ENCODE measurements at regions of chr21 and their contacts with region 1.

Region 1: GRCh38 chr21:43646550-43647260 is 12.6 kb downstream of the HSF2BP start:
- DNase-seq: peak; percentile 83 to 84
- H3K4me3 ChIP-seq: no peak overlapping the region
- H3K27ac ChIP-seq: peak overlapping the region; percentile 33
- H3K4me1 ChIP-seq: peaks cover 11% of the 10 kb centered on the region
- H3K27me3 ChIP-seq: no peaks in the 10 kb centered on the region
- CTCF ChIP-seq: peak; percentile 93

Region 2: DNA sequence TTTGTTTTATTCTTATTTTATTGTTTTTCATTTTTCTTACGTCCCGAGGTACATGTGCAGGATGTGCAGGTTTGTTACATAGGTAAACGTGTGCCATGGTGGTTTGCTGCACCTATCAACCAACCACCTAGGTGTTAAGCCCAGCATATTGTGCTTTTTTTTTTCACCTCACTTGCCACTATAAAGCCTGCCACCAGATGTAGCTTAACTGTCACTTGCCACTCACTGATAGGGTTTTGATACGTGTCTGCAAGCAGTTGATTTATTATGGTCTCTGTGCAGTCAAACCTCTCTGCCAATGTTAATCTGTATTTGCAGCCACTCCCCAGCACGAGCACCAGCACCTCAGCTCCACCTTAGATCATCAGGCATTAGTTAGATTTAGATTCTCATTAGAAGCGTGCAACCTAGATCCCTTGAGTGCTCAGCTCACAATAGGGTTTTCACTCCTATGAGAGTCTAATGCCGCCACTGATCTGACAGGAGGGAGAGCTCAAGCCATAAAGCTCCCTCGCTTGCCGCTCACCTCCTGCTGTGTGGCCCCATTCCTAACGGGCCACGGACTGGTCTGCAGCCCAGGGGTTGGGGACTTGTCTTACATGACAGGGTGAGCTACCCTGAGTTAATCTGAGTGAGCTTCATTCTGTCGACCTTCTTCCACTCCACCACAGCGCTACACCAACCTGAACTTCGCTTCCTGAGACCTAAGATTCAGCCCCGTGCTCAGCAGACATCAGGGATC is 1445.6 kb before region 1 on chr21:
- CTCF ChIA-PET with region 1: interaction called, 17 read pairs
- POLR2A ChIA-PET with region 1: no interaction called
- intact Hi-C with region 1: no loop called
- DNase-seq: no peak
- H3K4me3 ChIP-seq: no peak overlapping the region
- H3K27ac ChIP-seq: no peak overlapping the region
- H3K4me1 ChIP-seq: peaks cover 26% of the 10 kb centered on the region
- H3K27me3 ChIP-seq: no peaks in the 10 kb centered on the region
- CTCF ChIP-seq: no peak

Region 3: DNA sequence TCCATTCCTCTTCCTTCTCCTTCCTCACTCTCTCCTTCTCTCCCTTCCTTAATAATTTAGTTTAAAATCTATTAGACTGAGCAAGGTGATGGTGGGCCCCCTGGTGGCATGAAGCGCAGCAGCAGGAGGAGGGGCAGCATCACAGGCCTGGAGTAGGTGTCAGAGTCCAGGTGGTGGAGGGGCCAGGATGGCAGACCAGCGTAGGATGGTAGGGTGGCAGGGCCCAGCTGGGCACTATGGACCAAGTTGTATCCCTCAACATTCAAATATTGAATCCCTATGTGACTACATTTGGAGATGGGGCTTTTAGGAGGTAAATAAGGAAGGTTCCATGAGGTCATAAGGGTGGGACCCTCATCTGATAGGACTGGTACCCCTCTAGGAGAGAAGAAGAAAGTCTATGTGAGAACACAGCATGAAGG is 828.4 kb before region 1 on chr21:
- CTCF ChIA-PET with region 1: no interaction called
- POLR2A ChIA-PET with region 1: no interaction called
- intact Hi-C with region 1: no loop called
- DNase-seq: peak in 1 of 2 experiments; percentile 53
- H3K4me3 ChIP-seq: no peak overlapping the region
- H3K27ac ChIP-seq: no peak overlapping the region
- H3K4me1 ChIP-seq: 0 out of 2 replicates have a peak, but pooled peaks cover 7% of the 10 kb centered on the region
- H3K27me3 ChIP-seq: no peaks in the 10 kb centered on the region
- CTCF ChIP-seq: peak; percentile 87

Region 4: DNA sequence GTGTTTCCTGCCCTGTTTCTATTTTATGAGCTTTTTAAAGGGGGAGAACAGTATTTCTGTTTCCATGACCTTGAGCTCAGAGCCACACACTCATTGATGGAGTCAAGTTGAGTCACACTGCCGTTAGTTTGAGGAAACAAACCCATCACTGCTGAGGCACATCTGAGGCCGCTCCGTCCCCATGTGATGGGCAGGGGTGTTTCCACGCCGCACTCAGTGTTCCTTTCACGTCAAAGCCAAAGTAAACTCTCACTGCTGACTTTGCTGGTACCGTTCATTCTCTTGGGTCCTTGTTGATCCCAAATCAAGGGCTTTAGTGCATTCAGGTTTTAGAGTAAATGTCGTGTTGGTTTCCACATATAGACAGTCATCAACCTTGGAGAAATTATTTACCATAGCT is 623.5 kb before region 1 on chr21:
- CTCF ChIA-PET with region 1: no interaction called
- POLR2A ChIA-PET with region 1: interaction called, 12 read pairs
- intact Hi-C with region 1: no loop called
- DNase-seq: no peak
- H3K4me3 ChIP-seq: no peak overlapping the region
- H3K27ac ChIP-seq: no peak overlapping the region
- H3K4me1 ChIP-seq: peaks cover 16% of the 10 kb centered on the region
- H3K27me3 ChIP-seq: no peaks in the 10 kb centered on the region
- CTCF ChIP-seq: no peak

Region 5: DNA sequence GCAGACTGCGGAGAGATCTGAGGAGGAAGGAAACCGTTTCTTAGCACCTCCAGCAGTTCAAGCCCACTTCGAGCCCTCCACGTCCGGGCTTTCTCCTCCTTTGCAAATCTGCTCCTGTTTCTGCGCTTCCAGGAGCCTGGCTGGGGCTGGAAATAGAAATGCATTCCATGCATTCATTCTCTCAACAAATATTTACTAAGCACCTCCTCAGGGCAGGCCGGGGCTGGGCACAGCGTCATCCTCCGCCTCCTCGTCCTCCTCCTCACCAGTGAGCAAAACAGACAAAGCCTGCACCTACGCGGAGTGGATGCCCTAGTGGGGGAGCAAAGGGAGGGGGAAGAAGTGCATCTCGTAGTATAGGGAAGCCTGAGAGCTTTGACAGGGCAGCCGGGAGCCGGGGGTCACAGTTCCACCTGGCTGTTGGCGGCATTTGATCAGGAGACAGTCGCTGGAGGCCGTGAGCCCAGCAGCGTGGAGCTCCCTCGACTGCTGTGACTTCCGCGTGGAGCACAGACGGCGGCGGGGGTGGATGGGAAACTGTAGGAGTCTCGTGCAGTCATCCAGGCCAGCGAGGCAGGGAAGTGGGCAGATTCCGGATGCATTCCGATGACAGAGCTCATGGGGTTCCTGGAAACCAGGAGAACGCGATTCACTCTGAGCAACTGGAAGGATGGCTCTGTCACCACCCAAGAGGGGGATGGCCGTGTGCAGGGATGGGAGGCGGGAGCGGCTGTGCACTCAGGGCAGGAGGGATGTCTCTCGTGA is 313.2 kb before region 1 on chr21:
- CTCF ChIA-PET with region 1: no interaction called
- POLR2A ChIA-PET with region 1: no interaction called
- intact Hi-C with region 1: loop called (anchors 10 kb)
- DNase-seq: peak; percentile 81 to 85
- H3K4me3 ChIP-seq: peak overlapping the region; percentile 51; the same call in 1 of the 2 replicates
- H3K27ac ChIP-seq: peak overlapping the region; percentile 86
- H3K4me1 ChIP-seq: peaks cover 20% of the 10 kb centered on the region
- H3K27me3 ChIP-seq: no peaks in the 10 kb centered on the region
- CTCF ChIP-seq: no peak

Region 6: DNA sequence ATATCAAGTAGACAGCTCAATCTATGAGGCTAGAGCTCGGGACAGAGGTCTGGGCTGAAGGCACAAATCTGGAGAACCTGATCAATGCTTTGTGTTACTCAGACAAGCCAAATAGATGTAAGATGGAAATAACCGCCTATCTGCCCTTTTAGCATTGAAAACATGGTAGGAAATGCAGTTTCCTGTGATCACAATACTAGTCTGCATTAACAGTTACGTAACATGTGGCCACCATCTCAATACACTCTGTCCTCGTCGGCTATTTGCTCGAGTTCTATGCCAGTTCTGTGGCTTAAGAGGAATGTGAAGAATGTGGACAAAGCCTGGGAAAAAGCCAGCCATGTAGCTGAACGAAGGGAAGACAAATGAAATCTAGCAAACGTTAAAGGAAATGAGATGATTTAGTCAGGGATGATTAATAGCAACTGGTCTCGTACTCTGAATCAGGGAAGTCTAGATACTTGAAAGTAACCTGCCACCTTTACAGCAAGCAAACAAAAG is 60.7 kb before region 1 on chr21:
- CTCF ChIA-PET with region 1: no interaction called
- POLR2A ChIA-PET with region 1: no interaction called
- intact Hi-C with region 1: loop called (anchors 1 kb)
- DNase-seq: peak; percentile 76 to 98
- H3K4me3 ChIP-seq: no peak overlapping the region
- H3K27ac ChIP-seq: peak overlapping the region; percentile 99
- H3K4me1 ChIP-seq: peaks cover 39% of the 10 kb centered on the region
- H3K27me3 ChIP-seq: no peaks in the 10 kb centered on the region
- CTCF ChIP-seq: no peak

Measured in PC-9 (cell line).